Adrenal gland (tissue), 19 donors: ENCODE measurements at regions of chr10 and their contacts with region 1.

Region 1: GRCh38 chr10:70758757-70759514 is 26.2 kb downstream of the TBATA start:
- DNase-seq: peak; percentile 62 to 88 (median 73)
- H3K4me3 ChIP-seq: no peak overlapping the region
- H3K27ac ChIP-seq: no peak overlapping the region
- H3K4me1 ChIP-seq: no peaks in the 10 kb centered on the region
- H3K27me3 ChIP-seq: no peaks in the 10 kb centered on the region
- CTCF ChIP-seq: peak; percentile 61 to 86 (median 72)
- POLR2A ChIP-seq: no peak

Region 2: DNA sequence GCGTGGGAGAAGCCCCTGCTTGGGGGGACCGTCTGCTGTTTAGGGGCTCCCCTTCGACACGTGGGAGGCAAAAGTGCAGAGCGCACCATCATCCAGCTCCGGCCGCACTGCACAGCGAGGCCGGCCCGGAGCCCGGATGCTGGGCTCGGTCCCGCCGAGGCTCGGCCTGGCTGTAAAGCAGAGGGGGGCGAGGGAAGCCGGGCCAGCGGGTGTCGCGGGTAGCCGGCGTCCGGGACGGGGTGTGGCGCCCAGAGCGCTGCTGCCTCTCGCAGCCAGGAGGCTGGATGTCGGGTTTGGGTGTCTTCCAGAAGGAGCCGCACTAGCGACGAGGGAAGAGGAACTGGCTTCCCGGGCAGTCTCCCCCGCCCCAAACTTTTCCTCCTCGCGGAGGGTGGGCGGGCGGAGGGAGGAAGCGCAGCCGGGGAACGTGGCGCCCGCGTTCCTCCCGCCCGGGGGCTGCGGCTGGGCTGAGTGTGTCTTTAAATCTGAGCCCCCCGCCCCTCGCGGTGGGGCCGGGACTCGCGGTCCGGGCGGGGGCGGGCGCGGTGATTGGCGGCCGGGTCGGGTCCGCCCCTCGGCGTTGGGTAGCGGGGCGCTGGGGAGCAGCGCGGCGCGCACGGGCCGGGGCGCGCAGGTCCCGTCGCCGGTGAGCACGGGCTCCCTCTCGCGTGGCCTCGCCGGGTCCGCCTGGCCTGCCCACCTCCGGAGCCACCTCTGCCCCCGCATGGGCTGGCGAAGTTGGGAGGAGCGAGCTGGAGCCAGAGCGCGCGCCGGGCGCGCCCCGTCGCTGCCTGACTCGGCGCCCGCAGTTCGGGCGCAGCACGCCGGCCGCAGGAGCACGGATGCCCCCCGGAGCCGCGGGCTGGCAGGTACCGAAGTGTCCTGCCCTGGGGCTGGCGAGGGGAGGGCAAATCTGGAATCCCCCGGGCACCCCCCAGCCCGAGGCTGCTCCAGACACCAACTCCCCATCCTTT is 280.5 kb before region 1 on chr10 and contains the start of gene PALD1:
- intact Hi-C with region 1: loop called in 1 of 2 experiments (anchors 10 kb)
- DNase-seq: peak; percentile 52 to 80 (median 64)
- H3K4me3 ChIP-seq: peak within 1 kb of the TSS in 2 of 4 donors; percentile 8 to 75
- H3K27ac ChIP-seq: peak within 1 kb of the TSS in 4 of 5 donors; percentile 34 to 85 (median 42)
- H3K4me1 ChIP-seq: peaks cover 14 to 36% of the 10 kb centered on the region in 2 donors
- H3K27me3 ChIP-seq: no peaks in the 10 kb centered on the region
- CTCF ChIP-seq: peak in 5 of 6 experiments; percentile 16 to 47 (median 25)
- POLR2A ChIP-seq: no peak
- total RNA-seq, gene PALD1: 2.1 to 16.2 (median 8.1) TPM

Region 3: DNA sequence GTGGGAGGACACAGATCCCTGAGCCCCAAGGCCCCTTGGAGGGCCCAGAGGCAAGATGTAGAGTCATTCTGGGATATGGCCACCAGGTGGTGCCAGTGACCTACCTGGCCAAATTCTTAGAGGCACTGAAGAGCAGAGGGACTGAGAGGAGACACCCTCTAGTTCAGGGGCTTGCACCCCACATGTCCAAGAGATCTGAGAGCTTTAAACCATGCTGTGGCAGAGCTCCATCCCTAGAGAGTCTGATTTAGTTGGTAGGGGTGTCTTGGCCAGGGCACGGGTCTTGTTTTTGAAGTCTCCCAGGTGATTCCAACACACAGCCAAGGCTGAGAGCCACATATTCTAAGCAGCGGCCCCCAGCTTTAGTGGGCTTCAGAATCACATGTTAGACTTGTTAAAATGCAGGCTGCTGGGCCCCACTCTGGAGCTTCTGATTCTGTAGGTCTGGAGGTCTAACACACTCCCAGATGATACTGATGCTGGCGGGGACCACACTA is 208.9 kb before region 1 on chr10:
- intact Hi-C with region 1: loop called (anchors 2 to 5 kb)
- DNase-seq: peak; percentile 48 to 87 (median 69)
- H3K4me3 ChIP-seq: no peak overlapping the region
- H3K27ac ChIP-seq: no peak overlapping the region
- H3K4me1 ChIP-seq: no peaks in the 10 kb centered on the region
- H3K27me3 ChIP-seq: no peaks in the 10 kb centered on the region
- CTCF ChIP-seq: peak; percentile 87 to 94 (median 89)
- POLR2A ChIP-seq: no peak

Region 4: GRCh38 chr10:70558871-70559810 is 199.8 kb before region 1 on chr10:
- intact Hi-C with region 1: loop called in 1 of 2 experiments (anchors 5 kb)
- DNase-seq: peak; percentile 49 to 78 (median 67)
- H3K4me3 ChIP-seq: no peak overlapping the region
- H3K27ac ChIP-seq: peak overlapping the region in 1 of 5 donors; percentile 40
- H3K4me1 ChIP-seq: no peaks in the 10 kb centered on the region
- H3K27me3 ChIP-seq: no peaks in the 10 kb centered on the region
- CTCF ChIP-seq: peak; percentile 20 to 67 (median 52)
- POLR2A ChIP-seq: no peak